Head of caudate nucleus (tissue), 42 donors: ENCODE measurements at regions of chr20 and their contacts with region 1.

Region 1: DNA sequence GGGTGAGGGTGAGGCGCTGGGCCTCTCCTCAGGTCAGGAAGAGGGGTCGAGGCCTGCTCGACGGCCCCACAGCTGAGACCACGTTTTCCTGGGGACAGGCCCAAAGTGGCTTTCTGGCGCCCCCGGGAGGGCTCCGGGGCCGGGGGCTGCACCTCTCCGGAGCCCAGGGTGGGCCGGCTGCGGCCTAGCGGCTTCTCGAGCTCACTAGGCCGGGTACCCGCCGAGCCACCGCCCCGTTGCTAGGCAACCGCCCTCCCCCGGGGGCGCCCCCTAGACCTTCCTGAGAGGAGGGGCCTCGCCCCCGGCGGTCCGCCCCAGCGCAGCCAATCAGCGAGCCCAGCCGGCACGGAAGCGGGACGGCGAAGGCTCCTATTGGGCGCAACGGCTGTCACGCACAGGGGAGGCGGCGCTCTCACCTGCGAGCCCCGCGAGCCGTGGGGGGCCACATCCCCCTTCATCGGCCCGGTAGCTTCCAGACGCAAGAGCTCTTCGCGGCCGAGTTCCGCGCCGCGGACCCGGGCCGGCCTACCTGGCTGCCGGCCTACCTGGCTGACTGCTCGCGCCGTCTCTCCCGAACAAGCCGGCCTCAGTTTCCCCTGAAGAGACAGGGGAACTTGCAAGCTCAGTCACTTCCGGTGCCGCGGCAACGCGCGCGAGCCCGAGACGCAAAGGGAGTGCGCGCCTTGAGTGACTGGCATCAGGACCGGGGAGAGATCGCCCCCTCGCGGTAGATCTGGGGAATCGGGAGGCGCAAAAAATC is 831 bp upstream of the BCL2L1 start:
- DNase-seq: peak; percentile 95 to 100 (median 99)

Region 2: DNA sequence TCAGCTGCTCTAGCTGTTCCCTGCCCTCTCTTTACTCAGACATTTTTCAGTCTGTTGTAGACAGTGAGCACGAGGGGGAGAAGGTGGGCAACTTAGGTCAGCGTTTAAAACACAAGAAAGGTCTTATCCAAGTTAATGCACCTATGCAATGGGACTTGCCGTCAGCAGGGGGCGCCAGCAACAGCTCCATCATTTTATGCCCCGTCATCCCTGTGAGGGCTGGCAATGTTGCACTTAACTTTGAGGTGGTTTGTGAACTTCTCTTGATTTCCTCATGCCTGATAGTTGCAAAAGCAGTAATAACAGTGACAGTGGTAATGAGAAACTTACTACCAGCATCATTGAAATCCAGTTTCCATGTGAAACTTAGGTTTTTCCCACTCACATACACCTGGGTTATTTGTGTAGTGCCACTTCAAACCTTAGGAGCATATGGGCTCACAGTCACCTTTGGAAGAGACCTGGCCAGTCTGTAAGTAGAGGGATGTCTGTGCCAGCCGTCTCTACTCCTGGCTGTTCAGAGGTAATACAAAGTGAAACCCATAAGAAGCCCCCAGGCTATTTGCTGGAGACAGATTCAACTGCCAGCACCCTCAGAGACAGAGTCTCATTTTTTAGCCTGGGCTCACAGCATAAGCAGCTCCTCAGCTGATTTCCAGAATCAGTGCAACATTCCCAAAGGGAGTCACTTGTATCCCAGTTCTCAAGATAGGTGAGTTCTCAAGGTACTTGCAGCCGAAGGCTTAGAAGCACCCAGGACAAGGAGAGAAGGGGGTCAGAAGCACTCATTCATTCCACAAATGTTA is 163.2 kb before region 1 on chr20:
- intact Hi-C with region 1: loop called (anchors 10 kb)
- DNase-seq: peak; percentile 24 to 86 (median 70)

Region 3: GRCh38 chr20:31661625-31662371 is 61.7 kb before region 1 on chr20:
- intact Hi-C with region 1: loop called (anchors 2 kb)
- DNase-seq: peak; percentile 69 to 94 (median 86)

Region 4: GRCh38 chr20:31751126-31751525 is 27.6 kb after region 1 on chr20:
- intact Hi-C with region 1: no loop called
- DNase-seq: no peak